ENCODE measurements at regions of chr14 and their contacts with region 1.

Region 1: DNA sequence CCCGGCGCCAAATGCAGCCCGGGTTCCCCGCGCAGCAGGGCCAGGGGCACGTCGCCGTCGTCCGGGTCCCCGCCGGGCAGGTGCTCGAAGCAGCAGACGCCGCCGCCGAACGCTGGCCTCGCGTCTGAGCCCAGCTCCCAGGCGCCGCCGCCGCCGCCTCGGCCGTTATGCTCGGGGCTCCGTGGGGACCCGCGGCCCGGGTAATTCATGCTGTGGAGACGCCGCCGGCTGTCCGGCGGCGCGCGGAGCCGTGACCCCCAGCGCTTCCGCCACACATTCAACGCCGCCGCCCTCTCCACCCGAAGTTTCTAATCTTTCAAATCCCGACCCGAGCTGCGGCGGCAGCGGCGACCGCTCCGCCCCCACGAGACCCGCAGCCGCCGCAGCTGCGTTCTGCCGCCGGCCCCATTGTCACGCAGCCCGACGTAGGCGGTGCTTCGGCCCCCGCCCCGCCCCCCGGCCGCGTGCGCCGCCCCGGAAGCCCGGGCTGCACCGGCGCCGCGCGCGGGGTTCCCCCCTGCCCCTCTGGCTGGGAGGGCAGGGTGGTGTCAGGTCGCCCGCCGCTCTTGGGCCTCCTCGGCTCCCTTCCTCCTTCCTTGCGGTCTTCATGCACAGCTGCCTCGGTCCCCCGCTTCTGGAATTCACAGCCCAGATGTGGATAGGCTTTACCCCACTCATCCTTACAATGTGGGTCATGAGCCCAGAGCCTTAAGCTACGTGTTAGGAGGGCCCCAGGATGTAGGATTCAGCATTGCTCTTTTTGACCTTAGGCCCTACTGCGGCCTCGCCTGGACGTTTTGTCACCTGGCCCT is at the start of gene DDHD1:
- DNase-seq: peak; percentile 86
- H3K4me3 Mint-ChIP-seq: peak within 1 kb of the TSS; percentile 100
- H3K27ac Mint-ChIP-seq: peak within 1 kb of the TSS; percentile 98
- H3K4me1 Mint-ChIP-seq: peaks cover 41% of the 10 kb centered on the region
- H3K27me3 Mint-ChIP-seq: no peaks in the 10 kb centered on the region
- total RNA-seq, gene DDHD1: 53.6 to 58.5 TPM

Region 2: DNA sequence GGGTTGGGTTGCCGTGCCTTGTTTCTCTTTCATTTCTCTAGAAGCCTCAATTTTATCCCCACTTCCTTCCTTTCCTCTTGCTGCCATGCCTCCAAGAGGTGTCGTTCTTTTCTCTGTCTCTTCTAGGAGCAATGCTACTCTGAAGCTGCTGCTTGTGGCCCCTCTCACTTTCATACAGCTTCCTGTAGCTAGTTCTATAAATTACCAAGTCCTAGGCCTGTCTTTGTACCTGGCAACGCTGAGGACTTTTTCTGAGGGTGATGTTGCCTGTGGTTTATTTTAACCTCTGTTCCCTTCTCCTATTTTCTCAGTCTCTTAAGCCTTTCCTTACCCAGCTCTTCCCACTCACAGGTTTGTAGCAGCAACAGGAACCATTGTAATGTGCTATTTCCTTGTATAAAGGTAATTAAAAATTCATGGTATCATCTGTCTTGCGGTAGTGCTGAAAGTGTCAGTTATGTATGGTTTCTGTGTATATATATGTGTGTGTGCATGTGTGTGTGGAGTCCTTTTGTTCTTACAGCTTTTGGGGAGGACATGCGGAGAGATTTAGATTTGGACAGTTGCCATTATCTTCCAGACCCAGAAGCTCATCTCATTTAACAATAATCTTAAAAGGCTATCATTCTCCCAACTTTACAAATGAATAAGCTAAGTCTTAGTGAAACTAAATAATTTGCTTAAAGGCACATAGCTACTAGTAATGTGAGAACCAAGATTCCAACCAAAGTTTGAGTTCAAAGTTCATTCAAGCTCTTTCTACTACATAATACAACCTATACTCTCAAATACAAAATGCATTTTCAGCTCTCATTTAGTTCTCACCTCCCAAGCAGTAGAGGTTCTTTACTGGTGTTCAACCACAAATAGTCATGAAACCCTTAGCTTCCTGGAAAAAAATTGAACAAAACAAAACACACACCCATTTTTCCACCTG is 43.7 kb before region 1 on chr14:
- CTCF ChIA-PET with region 1: interaction called, 71 read pairs
- POLR2A ChIA-PET with region 1: interaction called, 264 read pairs
- DNase-seq: peak; percentile 80
- H3K4me3 Mint-ChIP-seq: no peak overlapping the region
- H3K27ac Mint-ChIP-seq: no peak overlapping the region
- H3K4me1 Mint-ChIP-seq: peaks cover 30% of the 10 kb centered on the region
- H3K27me3 Mint-ChIP-seq: no peaks in the 10 kb centered on the region

Region 3: GRCh38 chr14:53126731-53127130 is 26.4 kb before region 1 on chr14:
- CTCF ChIA-PET with region 1: interaction called, 4 read pairs
- POLR2A ChIA-PET with region 1: interaction called, 12 read pairs
- DNase-seq: no peak
- H3K4me3 Mint-ChIP-seq: peak overlapping the region; percentile 52
- H3K27ac Mint-ChIP-seq: peak overlapping the region; percentile 72
- H3K4me1 Mint-ChIP-seq: peaks cover 23% of the 10 kb centered on the region
- H3K27me3 Mint-ChIP-seq: no peaks in the 10 kb centered on the region

Region 4: GRCh38 chr14:53137568-53138203 is 15.4 kb before region 1 on chr14:
- CTCF ChIA-PET with region 1: interaction called, 5 read pairs
- POLR2A ChIA-PET with region 1: interaction called, 60 read pairs
- DNase-seq: no peak
- H3K4me3 Mint-ChIP-seq: no peak overlapping the region
- H3K27ac Mint-ChIP-seq: no peak overlapping the region
- H3K4me1 Mint-ChIP-seq: peaks cover 52% of the 10 kb centered on the region
- H3K27me3 Mint-ChIP-seq: no peaks in the 10 kb centered on the region

Region 5: GRCh38 chr14:53180268-53181221 is 27.4 kb after region 1 on chr14:
- CTCF ChIA-PET with region 1: no interaction called
- POLR2A ChIA-PET with region 1: no interaction called
- DNase-seq: peak; percentile 19
- H3K4me3 Mint-ChIP-seq: no peak overlapping the region
- H3K27ac Mint-ChIP-seq: no peak overlapping the region
- H3K4me1 Mint-ChIP-seq: peaks cover 22% of the 10 kb centered on the region
- H3K27me3 Mint-ChIP-seq: no peaks in the 10 kb centered on the region

Region 6: DNA sequence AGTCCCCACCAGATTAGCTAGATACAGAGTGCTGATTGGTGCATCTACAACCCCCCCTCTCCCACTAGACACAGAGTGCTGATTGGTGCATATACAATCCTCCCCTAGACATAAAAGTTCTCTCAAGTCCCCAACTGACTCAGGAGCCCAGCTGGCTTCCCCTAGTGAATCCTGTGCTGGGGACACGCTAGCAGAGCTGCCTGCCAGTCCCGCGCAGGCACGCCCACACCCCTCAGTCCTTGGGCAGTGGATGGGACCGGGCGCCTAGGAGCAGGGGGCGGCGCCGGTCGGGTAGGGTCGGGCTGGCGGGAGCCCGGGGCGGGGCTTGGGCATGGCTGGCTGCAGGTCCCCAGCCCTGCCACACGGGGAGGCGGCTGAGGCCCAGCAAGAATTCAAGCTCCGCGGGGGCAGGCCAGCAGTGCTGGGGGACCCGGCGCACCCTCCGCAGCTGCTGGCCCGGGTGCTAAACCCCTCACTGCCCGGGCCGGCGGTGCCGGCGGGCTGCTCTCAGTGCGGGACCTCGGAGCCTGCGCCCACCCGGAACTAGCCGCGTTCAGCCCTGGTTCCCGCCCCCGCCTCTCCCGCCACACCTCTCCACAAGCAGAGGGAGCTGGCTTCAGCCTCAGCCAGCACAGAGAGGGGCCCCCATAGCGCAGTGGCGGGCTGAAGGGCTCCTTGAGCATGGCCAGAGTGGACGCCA is 64.3 kb after region 1 on chr14:
- CTCF ChIA-PET with region 1: interaction called, 13 read pairs
- POLR2A ChIA-PET with region 1: interaction called, 22 read pairs
- DNase-seq: peak; percentile 80
- H3K4me3 Mint-ChIP-seq: peak overlapping the region; percentile 80
- H3K27ac Mint-ChIP-seq: peak overlapping the region; percentile 62
- H3K4me1 Mint-ChIP-seq: peaks cover 16% of the 10 kb centered on the region
- H3K27me3 Mint-ChIP-seq: no peaks in the 10 kb centered on the region

Region 7: GRCh38 chr14:53231201-53231600 is 78.1 kb after region 1 on chr14:
- CTCF ChIA-PET with region 1: no interaction called
- POLR2A ChIA-PET with region 1: no interaction called
- DNase-seq: no peak
- H3K4me3 Mint-ChIP-seq: no peak overlapping the region
- H3K27ac Mint-ChIP-seq: no peak overlapping the region
- H3K4me1 Mint-ChIP-seq: no peaks in the 10 kb centered on the region
- H3K27me3 Mint-ChIP-seq: no peaks in the 10 kb centered on the region

Region 8: DNA sequence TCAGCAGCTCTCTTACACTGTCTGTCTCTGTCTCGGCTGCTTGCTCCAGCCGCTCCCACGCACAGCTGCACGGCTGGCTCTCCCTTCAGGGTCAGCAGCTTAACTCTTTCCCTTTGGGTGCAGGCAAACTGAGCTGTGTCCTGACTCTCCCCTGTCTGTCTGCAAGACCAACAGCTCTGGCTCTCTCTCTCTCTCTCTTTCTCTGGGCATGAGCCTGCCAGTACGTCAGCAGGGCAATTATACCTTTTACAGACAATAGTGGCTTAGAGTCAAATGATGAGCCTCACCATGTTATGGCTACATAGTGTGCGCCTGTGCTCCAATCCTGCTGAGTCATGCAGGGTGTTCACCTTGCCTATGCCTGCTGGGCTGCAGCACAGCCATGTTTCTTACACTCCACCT is 120.6 kb after region 1 on chr14:
- CTCF ChIA-PET with region 1: no interaction called
- POLR2A ChIA-PET with region 1: no interaction called
- DNase-seq: no peak
- H3K4me3 Mint-ChIP-seq: no peak overlapping the region
- H3K27ac Mint-ChIP-seq: no peak overlapping the region
- H3K4me1 Mint-ChIP-seq: no peaks in the 10 kb centered on the region
- H3K27me3 Mint-ChIP-seq: peaks cover 2% of the 10 kb centered on the region

Measured in activated CD4-positive, alpha-beta memory T cell treated with anti-CD3 and anti-CD28 coated beads, Interleukin-2, amount 10 ng/mL, durations not matched to agents 7 days and 5 days (primary cell).